ENCODE measurements at regions of chr19 and their contacts with region 1.

Region 1: GRCh38 chr19:35357867-35358573 is at the start of gene FFAR3:
- DNase-seq: peak in 5 of 14 experiments; percentile 18 to 60 (median 30)
- ATAC-seq: peak; percentile 43
- H3K4me3 ChIP-seq: no peak within 1 kb of the TSS
- H3K4me3 Mint-ChIP-seq: no peak within 1 kb of the TSS
- H3K27ac ChIP-seq: no peak within 1 kb of the TSS
- H3K27ac Mint-ChIP-seq: no peak within 1 kb of the TSS
- H3K4me1 ChIP-seq: peaks cover 7% of the 10 kb centered on the region
- H3K4me1 Mint-ChIP-seq: peaks cover 9% of the 10 kb centered on the region
- H3K27me3 ChIP-seq: no peaks in the 10 kb centered on the region
- H3K27me3 Mint-ChIP-seq: peaks cover 5% of the 10 kb centered on the region
- CTCF ChIP-seq: no peak
- total RNA-seq, gene FFAR3: not detected

Region 2: DNA sequence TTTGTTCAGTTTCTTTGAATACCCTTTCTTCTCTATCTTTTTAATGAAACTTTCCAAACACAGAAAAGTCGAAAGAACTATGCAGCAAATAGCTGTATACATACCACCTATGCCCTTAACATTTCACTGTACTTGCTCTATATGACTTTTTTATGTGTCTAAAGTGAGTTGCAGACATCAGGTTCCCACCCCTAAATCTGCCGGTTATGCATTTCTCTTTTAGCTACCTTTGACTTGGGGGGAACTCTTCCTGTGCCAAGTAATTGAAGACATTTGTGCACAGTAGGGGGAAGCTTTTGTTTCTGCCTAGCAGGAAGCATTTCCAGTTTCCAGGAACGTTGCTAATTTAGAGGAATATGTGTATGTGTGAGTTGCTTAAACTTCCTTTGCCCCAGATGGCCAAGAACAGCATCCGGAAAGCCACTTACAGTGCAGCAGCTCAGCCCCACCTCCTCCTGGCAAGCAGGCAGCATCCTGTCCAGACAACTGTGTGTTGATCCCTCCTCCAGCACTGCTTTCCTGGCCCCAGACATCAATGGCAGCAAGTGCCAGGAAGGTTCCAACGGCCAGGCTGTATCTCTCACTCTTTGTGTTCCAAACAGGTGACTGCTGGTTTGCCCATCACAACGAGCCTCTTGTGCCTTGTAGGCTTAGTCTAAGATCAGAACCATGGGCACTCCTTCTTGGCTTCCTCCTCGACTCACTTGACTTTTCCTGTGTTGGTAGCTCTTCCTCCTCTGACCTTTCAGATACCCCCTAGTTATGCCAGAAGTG is 372.6 kb before region 1 on chr19:
- CTCF ChIA-PET with region 1: no interaction called
- POLR2A ChIA-PET with region 1: no interaction called
- intact Hi-C with region 1: no loop called
- DNase-seq: peak in 6 of 14 experiments; percentile 29 to 56 (median 42)
- ATAC-seq: peak; percentile 77
- H3K4me3 ChIP-seq: no peak overlapping the region
- H3K4me3 Mint-ChIP-seq: peak overlapping the region; percentile 43
- H3K27ac ChIP-seq: peak overlapping the region in 1 of 2 donors; percentile 8
- H3K27ac Mint-ChIP-seq: peak overlapping the region; percentile 50
- H3K4me1 ChIP-seq: peaks cover 13% of the 10 kb centered on the region
- H3K4me1 Mint-ChIP-seq: peaks cover 22% of the 10 kb centered on the region
- H3K27me3 ChIP-seq: no peaks in the 10 kb centered on the region
- H3K27me3 Mint-ChIP-seq: no peaks in the 10 kb centered on the region
- CTCF ChIP-seq: no peak

Region 3: DNA sequence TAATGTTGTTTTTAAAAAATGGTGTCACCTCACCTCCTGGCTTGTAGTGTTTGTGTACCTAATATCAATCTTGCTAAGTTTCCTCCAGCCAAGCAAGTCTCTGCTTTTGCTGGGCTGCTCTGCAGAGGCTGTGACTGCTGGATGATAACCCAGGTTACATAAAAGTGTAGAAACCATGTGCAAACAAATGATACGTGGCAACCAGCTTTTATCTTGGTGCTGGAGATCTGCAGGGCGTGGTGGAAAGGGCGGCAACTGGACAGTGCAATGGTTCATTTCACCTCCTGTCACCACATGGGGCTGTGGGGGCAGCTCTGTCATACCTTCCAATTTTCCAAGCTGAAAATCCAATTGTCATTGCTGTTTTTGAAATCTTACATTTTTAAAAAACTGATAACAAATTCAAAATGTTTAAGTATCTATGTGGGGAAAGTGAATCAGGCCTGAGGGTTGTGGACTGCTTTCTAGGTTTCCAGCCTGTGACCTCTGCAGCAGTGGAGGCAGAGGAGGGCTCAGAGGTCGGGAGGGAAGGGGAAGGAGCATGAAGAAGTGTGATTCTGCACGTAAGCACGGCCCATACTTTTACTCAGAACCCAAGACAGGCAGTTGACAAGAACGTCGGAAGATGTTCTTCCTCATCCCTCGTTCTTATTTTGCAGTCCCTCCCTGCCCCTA is 22.6 kb after region 1 on chr19:
- CTCF ChIA-PET with region 1: no interaction called
- POLR2A ChIA-PET with region 1: no interaction called
- intact Hi-C with region 1: no loop called
- DNase-seq: no peak
- ATAC-seq: no peak
- H3K4me3 ChIP-seq: no peak overlapping the region
- H3K4me3 Mint-ChIP-seq: no peak overlapping the region
- H3K27ac ChIP-seq: no peak overlapping the region
- H3K27ac Mint-ChIP-seq: no peak overlapping the region
- H3K4me1 ChIP-seq: no peaks in the 10 kb centered on the region
- H3K4me1 Mint-ChIP-seq: no peaks in the 10 kb centered on the region
- H3K27me3 ChIP-seq: no peaks in the 10 kb centered on the region
- H3K27me3 Mint-ChIP-seq: peaks cover 19% of the 10 kb centered on the region
- CTCF ChIP-seq: no peak

Region 4: GRCh38 chr19:35462476-35462953 is 104.5 kb after region 1 on chr19:
- CTCF ChIA-PET with region 1: interaction called, 27 read pairs
- POLR2A ChIA-PET with region 1: interaction called, 15 read pairs
- intact Hi-C with region 1: no loop called
- DNase-seq: peak in 13 of 14 experiments; percentile 17 to 94 (median 50)
- ATAC-seq: peak; percentile 91
- H3K4me3 ChIP-seq: no peak overlapping the region
- H3K4me3 Mint-ChIP-seq: peak overlapping the region; percentile 52
- H3K27ac ChIP-seq: peak overlapping the region; percentile 66 to 73
- H3K27ac Mint-ChIP-seq: peak overlapping the region; percentile 75
- H3K4me1 ChIP-seq: peaks cover 51% of the 10 kb centered on the region
- H3K4me1 Mint-ChIP-seq: peaks cover 33% of the 10 kb centered on the region
- H3K27me3 ChIP-seq: no peaks in the 10 kb centered on the region
- H3K27me3 Mint-ChIP-seq: no peaks in the 10 kb centered on the region
- CTCF ChIP-seq: no peak